KBM-7 (cell line): ENCODE measurements at regions of chr1 and their contacts with region 1.

Region 1: DNA sequence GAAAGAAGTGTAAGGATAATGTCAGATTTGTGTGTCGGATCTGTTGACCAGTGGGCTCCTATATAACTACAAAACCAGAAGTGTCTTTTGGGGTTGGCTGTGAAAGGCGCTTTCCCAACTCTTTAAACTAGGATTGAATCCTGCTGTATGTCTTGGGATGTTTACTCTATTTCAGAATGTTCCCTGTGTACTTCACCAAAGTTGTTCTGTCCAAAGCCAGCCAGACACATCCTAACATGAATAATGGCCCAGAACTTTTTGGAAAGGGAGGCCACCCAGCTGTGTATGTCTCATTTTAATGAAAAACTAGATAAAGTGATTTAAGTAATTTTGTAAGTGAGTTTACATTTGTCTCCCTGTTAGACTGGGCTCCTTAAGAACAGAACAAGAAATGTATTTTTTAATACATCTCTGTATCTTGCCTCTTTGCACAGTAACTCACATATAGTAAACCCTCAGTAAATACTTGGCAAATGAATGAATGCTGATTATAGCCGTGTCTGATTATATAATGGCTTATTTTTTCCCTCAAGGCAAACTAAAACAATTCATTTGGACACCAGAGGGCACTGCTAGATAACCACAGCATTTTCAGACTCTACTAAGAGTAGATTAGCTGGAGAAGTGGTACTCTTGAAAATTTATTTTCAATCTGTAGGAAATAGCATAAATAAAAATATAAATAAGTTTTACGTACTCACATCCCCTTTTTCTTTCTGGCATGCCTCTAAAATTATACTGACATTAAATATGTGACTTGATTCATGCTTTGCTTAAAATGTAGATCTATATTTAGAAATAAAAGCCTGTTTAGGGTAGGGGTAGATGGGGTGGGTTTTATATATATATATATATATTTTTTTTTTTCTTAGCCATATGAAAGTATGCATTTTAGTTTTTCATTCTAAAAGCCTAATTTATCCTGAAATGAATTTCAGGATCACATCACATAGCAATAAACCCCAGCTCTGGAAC is 23.8 kb downstream of the TSEN15 start:
- DNase-seq: peak; percentile 81

Region 2: DNA sequence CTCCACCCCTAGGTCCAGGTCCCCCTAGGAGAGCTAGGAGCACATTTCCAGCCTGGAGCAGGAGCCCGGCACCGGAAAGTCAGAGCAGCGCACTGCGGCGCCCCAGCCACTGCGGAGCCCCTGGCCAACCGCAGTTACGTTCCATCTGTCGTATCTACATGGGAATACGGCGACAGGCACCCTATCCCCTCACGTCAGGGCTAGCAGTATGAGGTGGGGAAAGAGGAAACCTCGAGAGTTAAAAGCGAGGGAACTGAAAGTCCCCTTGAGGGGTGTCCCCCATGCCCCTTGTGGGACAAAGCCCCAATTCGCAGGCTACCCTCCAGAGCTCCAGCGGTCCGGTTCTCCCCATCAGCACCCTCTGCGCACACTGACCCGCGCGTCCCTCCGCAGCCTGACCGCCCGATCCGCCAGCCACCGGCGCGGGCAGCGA is 38.8 kb before region 1 on chr1:
- in situ Hi-C with region 1: no loop called
- DNase-seq: no peak

Region 3: GRCh38 chr1:184127520-184127919 is 52.2 kb after region 1 on chr1:
- in situ Hi-C with region 1: no loop called
- DNase-seq: no peak

Region 4: DNA sequence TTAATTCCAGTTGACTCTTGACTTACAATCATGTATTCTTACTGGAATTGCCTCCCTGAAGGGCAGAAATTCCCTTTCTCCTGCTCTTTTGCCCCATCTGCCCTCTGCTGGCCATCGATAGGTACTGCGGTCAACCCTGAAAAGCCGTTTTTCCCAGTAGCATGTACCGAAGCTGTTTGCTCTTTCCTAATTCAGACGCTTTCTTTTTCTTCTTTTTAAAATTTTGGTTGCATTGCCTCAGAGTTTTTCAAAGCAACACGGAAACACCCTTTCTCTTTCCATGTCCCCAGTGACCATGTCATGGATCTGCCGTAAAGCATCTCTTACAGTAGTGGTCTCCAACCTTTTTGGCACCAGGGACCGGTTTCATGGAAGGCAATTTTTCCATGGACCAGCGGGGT is 147.3 kb after region 1 on chr1:
- in situ Hi-C with region 1: loop called (anchors 25 kb)
- DNase-seq: peak; percentile 62

Region 5: DNA sequence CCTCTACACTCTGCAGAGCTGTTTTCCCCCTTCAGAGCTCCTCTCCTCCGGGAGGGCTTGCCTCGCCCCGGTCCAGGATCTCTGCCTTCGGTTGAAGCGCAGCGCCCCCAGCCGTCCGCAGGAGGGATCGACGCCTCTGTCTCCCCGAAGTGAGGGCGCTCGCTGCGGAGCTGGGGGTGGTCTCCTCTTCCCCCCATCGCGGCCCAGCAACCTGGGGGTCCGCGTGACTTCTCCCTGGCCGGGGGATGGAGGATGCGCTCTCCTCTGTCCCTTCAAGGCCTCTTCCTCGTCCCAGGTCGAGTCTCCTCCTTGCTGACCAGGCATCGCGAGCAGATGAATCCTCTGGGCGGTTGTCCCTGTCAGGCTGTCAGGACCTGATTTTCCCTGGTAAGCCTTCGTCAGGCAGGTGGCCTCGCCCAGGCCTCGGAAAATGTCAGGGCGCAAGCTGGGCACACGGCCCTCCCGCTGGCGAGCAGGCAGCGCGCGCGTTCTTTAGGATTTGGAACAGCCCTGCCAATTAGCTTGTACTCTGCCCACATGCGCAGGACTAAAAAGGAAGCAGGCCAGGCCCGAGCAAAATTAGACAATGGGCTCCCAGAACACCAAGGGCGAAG is 588.8 kb after region 1 on chr1:
- in situ Hi-C with region 1: loop called (anchors 25 kb)
- DNase-seq: peak; percentile 70